Psoas muscle (tissue), 8 donors: ENCODE measurements at regions of chr11 and their contacts with region 1.

Region 1: DNA sequence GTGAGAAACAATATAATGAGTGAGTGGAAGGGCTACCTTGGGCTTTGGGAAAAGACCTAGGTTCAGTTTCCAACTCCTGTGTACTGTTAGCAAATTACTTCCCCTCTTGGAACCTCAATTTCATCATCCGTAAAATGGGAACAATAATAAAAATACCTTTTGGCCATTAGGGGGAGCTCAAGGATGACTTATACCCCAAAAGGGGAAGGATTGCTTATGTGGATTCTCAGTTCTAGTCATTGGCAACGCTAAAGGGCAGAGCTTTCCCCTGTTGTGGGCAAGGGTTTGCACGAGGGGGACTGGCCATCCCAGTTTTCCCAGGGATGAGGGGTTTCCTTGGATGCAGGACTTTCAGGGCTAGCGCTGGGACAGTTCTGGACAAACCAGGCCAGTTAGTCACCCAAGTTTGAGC is 3.1 kb upstream of the COMMD9 start:
- DNase-seq: no peak
- ATAC-seq: no peak
- H3K4me3 ChIP-seq: no peak overlapping the region
- H3K27ac ChIP-seq: no peak overlapping the region
- H3K4me1 ChIP-seq: peaks cover 18% of the 10 kb centered on the region
- H3K27me3 ChIP-seq: no peaks in the 10 kb centered on the region
- CTCF ChIP-seq: peak; percentile 51

Region 2: GRCh38 chr11:36212564-36213392 is 79.5 kb before region 1 on chr11:
- intact Hi-C with region 1: no loop called
- DNase-seq: no peak
- ATAC-seq: no peak
- H3K4me3 ChIP-seq: no peak overlapping the region
- H3K27ac ChIP-seq: no peak overlapping the region
- H3K4me1 ChIP-seq: no peaks in the 10 kb centered on the region
- H3K27me3 ChIP-seq: no peaks in the 10 kb centered on the region
- CTCF ChIP-seq: no peak

Region 3: GRCh38 chr11:36478700-36479329 is 186.5 kb after region 1 on chr11:
- intact Hi-C with region 1: loop called (anchors 2 to 5 kb)
- DNase-seq: no peak
- ATAC-seq: peak in 3 of 4 donors; percentile 37 to 66 (median 50)
- H3K4me3 ChIP-seq: no peak overlapping the region
- H3K27ac ChIP-seq: no peak overlapping the region
- H3K4me1 ChIP-seq: no peaks in the 10 kb centered on the region
- H3K27me3 ChIP-seq: no peaks in the 10 kb centered on the region
- CTCF ChIP-seq: peak; percentile 53

Region 4: DNA sequence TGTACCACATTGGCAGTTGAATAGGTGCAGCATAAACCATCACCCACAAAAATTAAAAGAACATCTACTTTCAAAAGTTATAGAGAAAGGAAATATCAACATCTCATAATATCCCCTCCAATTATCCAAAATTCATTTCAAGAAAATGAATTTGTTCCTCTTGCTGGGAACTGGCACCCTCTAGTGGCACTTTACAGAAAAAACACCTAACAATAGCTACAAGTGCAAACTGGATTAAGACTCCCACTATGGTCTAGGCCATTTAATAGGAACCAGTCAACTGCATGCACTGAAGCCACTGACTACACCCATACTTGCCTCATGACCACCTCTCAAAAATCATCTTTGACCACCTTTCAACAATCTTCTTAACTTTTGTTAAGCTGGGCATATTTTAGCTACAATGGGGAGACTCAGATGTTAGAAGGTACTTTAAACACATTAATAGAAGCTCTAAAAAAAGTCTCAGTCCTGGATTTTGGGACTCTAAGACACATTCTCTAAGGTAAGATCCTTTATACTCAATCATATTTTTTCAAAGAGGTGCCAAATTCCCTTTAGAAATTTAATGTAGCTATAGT is 200.5 kb after region 1 on chr11:
- intact Hi-C with region 1: loop called in 1 of 2 experiments (anchors 5 kb)
- DNase-seq: no peak
- ATAC-seq: peak in 3 of 4 donors; percentile 53 to 71 (median 66)
- H3K4me3 ChIP-seq: no peak overlapping the region
- H3K27ac ChIP-seq: no peak overlapping the region
- H3K4me1 ChIP-seq: peaks cover 19% of the 10 kb centered on the region
- H3K27me3 ChIP-seq: no peaks in the 10 kb centered on the region
- CTCF ChIP-seq: peak; percentile 81

Region 5: GRCh38 chr11:36672813-36673450 is 380.6 kb after region 1 on chr11:
- intact Hi-C with region 1: no loop called
- DNase-seq: no peak
- ATAC-seq: no peak
- H3K4me3 ChIP-seq: no peak overlapping the region
- H3K27ac ChIP-seq: no peak overlapping the region
- H3K4me1 ChIP-seq: no peaks in the 10 kb centered on the region
- H3K27me3 ChIP-seq: no peaks in the 10 kb centered on the region
- CTCF ChIP-seq: peak; percentile 87

Region 6: DNA sequence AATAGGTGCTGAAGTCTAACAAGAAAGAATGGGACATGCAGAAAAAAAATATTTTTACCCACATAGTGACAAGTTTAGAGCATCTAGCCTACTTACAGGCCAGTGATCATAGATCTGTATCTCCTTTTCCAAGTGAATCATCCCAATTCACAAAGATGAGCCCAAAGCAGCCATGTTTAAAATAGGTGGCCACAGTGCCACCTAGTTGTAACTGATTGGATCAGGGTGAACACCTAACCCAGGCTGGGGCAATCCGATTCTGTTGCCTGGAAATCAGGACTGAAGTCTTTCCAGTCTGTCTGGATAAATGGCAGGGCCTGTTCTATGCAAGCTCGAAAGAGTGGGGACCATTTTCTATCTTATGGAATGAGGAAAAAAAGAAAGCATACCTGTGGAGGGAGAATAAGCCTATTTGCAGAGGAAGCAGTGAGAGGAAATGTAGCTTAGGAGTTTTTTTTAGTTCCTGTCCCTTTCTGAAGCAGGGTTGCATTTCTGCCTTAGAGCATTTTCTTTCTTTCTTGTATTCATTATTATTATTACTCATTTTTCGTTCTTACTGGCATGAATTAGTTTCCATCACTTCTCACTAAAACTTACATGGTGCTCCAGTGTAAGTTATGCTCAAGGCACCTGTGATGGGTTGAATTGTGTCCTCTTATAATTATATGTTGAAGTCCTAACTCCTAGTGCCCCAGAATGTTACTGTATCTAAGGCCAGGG is 418.9 kb after region 1 on chr11:
- intact Hi-C with region 1: no loop called
- DNase-seq: no peak
- ATAC-seq: no peak
- H3K4me3 ChIP-seq: no peak overlapping the region
- H3K27ac ChIP-seq: no peak overlapping the region
- H3K4me1 ChIP-seq: no peaks in the 10 kb centered on the region
- H3K27me3 ChIP-seq: peaks cover 0 to 4% (median 0%) of the 10 kb centered on the region in 3 donors
- CTCF ChIP-seq: no peak